ENCODE measurements at regions of chr11 and their contacts with region 1.

Region 1: DNA sequence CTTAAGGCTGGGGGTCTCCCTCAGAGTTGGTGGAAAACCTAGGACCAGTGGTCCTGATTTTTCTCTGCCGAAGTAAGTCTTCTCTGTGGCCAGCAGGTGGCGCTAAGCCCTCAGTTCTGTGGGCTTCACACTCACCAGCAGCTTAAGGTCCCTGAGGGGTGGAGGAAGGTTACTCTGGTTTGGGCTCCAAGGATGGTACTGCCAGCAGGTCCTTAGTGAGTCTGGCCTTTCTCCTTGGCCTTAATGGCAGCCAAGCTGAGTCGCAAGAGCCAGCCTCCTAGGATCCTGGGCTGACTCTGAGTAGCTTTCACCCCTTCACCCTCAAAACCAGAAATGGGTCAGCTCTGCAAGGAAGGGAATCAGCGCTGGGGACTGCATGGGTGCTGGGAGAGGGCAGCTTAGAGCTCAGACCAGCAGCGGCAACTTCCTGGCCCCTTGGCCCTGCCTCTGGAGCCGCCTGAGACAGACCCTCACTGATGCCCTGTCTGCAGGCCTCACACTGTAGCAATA is 4.4 kb downstream of the KCNJ11 start:
- DNase-seq: peak; percentile 81
- H3K4me3 Mint-ChIP-seq: no peak overlapping the region
- H3K27ac Mint-ChIP-seq: no peak overlapping the region
- H3K4me1 Mint-ChIP-seq: no peaks in the 10 kb centered on the region
- H3K27me3 Mint-ChIP-seq: no peaks in the 10 kb centered on the region
- CTCF ChIP-seq: peak; percentile 90

Region 2: GRCh38 chr11:16028419-16028818 is 1355.6 kb before region 1 on chr11:
- CTCF ChIA-PET with region 1: no interaction called
- POLR2A ChIA-PET with region 1: no interaction called
- intact Hi-C with region 1: no loop called
- DNase-seq: no peak
- H3K4me3 Mint-ChIP-seq: no peak overlapping the region
- H3K27ac Mint-ChIP-seq: no peak overlapping the region
- H3K4me1 Mint-ChIP-seq: no peaks in the 10 kb centered on the region
- H3K27me3 Mint-ChIP-seq: no peaks in the 10 kb centered on the region
- CTCF ChIP-seq: no peak

Region 3: DNA sequence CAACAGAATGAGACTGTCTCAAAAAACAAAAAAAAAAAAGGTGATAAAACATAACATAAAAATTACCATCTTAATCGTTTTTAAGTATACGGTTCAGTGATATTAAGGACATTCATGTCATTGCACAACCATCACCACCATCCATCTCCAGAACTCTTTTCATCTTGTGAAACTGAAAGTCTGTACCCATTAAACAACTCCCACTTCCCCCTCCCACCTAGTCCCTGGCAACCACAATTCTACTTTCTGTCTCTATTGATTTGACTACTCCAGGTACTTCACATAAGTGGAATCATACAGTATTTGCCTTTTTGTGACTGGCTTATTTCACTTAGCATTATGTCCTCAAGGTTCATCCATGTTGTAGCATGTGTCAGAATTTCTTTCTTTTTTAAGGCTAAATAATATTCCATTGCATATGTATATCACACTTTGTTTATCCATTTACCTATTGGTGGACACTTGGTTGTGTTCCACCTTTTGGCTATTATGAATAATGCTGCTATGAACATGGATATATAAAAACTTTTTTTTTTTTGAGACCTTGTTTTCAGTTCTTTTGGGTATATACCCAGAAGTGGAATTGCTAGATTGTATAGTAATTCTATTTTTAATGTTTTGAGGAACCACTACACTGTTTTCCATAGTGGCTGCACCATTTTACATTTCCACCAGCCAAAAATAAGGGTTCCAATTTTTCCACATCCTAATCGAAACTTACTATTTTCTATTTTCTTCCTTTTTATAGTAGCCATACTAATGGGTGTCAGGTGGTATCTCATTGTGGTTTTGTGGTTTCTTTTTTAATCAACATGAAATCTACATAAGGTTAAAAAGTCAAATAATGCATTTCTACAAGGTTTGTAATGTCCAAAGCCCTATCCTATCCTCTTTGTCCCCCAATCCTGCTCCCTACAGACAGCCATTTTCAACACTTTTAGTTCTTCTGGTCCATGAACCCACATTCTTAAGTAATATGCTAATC is 152.9 kb before region 1 on chr11:
- CTCF ChIA-PET with region 1: interaction called, 23 read pairs
- POLR2A ChIA-PET with region 1: no interaction called
- intact Hi-C with region 1: loop called (anchors 1 kb)
- DNase-seq: no peak
- H3K4me3 Mint-ChIP-seq: no peak overlapping the region
- H3K27ac Mint-ChIP-seq: no peak overlapping the region
- H3K4me1 Mint-ChIP-seq: peaks cover 6% of the 10 kb centered on the region
- H3K27me3 Mint-ChIP-seq: no peaks in the 10 kb centered on the region
- CTCF ChIP-seq: no peak

Region 4: GRCh38 chr11:17366495-17366894 is 17.6 kb before region 1 on chr11:
- CTCF ChIA-PET with region 1: interaction called, 47 read pairs
- POLR2A ChIA-PET with region 1: no interaction called
- intact Hi-C with region 1: no loop called
- DNase-seq: no peak
- H3K4me3 Mint-ChIP-seq: no peak overlapping the region
- H3K27ac Mint-ChIP-seq: no peak overlapping the region
- H3K4me1 Mint-ChIP-seq: no peaks in the 10 kb centered on the region
- H3K27me3 Mint-ChIP-seq: no peaks in the 10 kb centered on the region
- CTCF ChIP-seq: no peak

Region 5: DNA sequence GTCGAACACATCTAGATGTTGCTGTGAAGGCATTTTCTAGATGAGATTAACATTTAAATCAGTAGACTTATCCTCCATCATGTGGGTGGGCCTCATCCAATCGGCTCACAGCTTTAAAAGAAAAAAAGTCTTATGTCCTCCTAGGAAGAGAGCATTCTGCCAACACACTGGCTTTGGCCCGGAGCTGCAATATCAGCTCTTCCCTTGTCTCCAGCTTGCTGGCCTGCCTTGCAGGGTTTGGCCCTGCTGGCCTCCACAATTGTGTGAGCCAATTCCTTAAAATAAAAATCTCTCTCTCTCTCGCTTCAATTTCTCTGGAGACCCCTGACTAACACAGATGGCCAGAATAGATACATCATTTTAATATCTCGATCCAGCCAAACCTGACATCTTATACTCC is 105.7 kb after region 1 on chr11:
- CTCF ChIA-PET with region 1: interaction called, 22 read pairs
- POLR2A ChIA-PET with region 1: no interaction called
- intact Hi-C with region 1: no loop called
- DNase-seq: no peak
- H3K4me3 Mint-ChIP-seq: no peak overlapping the region
- H3K27ac Mint-ChIP-seq: no peak overlapping the region
- H3K4me1 Mint-ChIP-seq: no peaks in the 10 kb centered on the region
- H3K27me3 Mint-ChIP-seq: peaks cover 44% of the 10 kb centered on the region
- CTCF ChIP-seq: no peak

Region 6: DNA sequence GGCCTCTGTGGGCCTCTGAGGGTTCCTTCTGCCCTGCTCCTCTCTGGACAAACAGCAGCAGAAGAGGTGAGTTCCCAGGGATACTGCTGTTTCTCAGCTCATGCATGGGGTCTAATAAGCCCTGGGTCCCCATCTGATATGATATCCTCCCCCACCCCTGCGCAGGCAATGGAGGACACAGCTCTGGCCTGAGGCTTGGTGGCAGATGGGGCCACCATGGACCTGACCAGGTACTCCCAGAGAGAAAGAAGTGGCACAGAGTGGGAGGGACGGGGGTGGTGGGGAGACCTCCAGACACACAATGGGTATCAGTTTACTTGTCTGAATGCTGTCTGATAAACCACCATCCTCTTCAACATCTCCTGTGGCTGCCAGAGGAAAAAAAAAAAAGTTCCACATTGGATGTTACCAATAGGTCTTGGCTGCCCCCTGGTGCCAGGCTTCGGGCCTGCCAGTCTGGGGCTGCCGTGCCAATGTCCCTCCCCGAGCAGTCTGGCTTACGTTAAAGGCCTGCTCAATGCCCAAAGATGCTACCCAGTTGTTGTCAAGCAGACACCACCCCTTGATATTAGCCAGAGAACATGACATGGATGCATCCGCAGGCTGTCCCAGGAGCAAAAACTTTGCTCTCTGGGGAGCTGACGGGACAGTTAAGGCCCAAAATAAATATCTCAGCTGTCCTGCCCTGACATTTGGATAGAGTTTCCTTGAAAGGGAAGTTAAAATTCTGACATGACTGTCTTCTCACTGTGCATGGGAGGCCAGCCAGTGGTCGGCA is 120.5 kb after region 1 on chr11:
- CTCF ChIA-PET with region 1: interaction called, 208 read pairs
- POLR2A ChIA-PET with region 1: interaction called, 3 read pairs
- intact Hi-C with region 1: loop called (anchors 1 kb)
- DNase-seq: peak; percentile 74
- H3K4me3 Mint-ChIP-seq: no peak overlapping the region
- H3K27ac Mint-ChIP-seq: no peak overlapping the region
- H3K4me1 Mint-ChIP-seq: no peaks in the 10 kb centered on the region
- H3K27me3 Mint-ChIP-seq: peaks cover 45% of the 10 kb centered on the region
- CTCF ChIP-seq: peak; percentile 89

Region 7: GRCh38 chr11:17528181-17528691 is 144.2 kb after region 1 on chr11:
- CTCF ChIA-PET with region 1: interaction called, 68 read pairs
- POLR2A ChIA-PET with region 1: interaction called, 5 read pairs
- intact Hi-C with region 1: loop called (anchors 1 kb)
- DNase-seq: peak; percentile 54
- H3K4me3 Mint-ChIP-seq: no peak overlapping the region
- H3K27ac Mint-ChIP-seq: no peak overlapping the region
- H3K4me1 Mint-ChIP-seq: no peaks in the 10 kb centered on the region
- H3K27me3 Mint-ChIP-seq: peaks cover 43% of the 10 kb centered on the region
- CTCF ChIP-seq: peak; percentile 70

Region 8: DNA sequence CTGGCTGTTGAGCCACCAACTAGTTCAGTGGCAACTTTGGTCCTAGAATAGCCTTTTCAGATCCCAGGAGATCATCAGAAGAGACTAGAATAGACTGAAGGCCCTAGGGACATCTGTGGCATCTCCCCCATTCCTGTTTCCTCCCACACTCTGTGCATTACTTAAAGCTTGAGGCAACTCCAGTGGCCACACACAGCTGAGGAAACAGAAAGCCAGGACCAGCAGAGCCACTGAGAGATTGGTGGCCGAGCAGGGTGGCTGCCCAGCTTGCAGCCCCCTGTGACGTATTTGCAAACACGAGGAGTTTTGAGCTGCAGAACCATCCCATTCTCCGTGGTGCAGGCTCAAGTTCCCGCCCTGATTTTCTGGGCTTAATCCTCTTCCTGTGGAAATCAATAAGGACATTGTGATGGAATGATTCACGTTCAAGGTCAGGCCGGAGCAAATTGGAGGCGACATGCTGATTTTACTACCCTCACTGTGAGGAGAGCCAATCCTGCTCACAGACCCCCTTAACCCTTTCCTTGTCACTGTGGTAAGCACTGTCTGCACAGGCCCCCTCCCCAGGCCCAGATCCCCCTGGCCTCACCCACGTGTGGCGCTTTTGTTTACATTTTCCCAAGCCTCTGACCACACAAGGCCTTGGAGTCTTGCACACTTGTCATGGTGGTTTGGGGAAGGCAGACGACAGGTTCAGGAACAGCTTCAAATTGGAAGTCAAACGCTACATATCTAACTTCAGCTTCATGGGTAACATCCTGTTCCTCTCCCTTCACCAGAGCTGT is 266.3 kb after region 1 on chr11:
- CTCF ChIA-PET with region 1: no interaction called
- POLR2A ChIA-PET with region 1: no interaction called
- intact Hi-C with region 1: no loop called
- DNase-seq: no peak
- H3K4me3 Mint-ChIP-seq: no peak overlapping the region
- H3K27ac Mint-ChIP-seq: no peak overlapping the region
- H3K4me1 Mint-ChIP-seq: no peaks in the 10 kb centered on the region
- H3K27me3 Mint-ChIP-seq: peaks cover 46% of the 10 kb centered on the region
- CTCF ChIP-seq: no peak